ENCODE measurements at regions of chr10 and their contacts with region 1.

Region 1: GRCh38 chr10:59906417-59907202 is at the start of gene CCDC6:
- DNase-seq: peak; percentile 94
- ATAC-seq: peak; percentile 89
- H3K4me3 Mint-ChIP-seq: peak within 1 kb of the TSS; percentile 89
- H3K27ac Mint-ChIP-seq: peak within 1 kb of the TSS; percentile 94
- H3K4me1 Mint-ChIP-seq: peaks cover 54% of the 10 kb centered on the region
- H3K27me3 Mint-ChIP-seq: no peaks in the 10 kb centered on the region
- total RNA-seq, gene CCDC6: 18.3 to 19.4 TPM

Region 2: GRCh38 chr10:59479426-59479825 is 427.2 kb before region 1 on chr10:
- CTCF ChIA-PET with region 1: no interaction called
- POLR2A ChIA-PET with region 1: no interaction called
- DNase-seq: no peak
- ATAC-seq: no peak
- H3K4me3 Mint-ChIP-seq: no peak overlapping the region
- H3K27ac Mint-ChIP-seq: no peak overlapping the region
- H3K4me1 Mint-ChIP-seq: no peaks in the 10 kb centered on the region
- H3K27me3 Mint-ChIP-seq: no peaks in the 10 kb centered on the region

Region 3: DNA sequence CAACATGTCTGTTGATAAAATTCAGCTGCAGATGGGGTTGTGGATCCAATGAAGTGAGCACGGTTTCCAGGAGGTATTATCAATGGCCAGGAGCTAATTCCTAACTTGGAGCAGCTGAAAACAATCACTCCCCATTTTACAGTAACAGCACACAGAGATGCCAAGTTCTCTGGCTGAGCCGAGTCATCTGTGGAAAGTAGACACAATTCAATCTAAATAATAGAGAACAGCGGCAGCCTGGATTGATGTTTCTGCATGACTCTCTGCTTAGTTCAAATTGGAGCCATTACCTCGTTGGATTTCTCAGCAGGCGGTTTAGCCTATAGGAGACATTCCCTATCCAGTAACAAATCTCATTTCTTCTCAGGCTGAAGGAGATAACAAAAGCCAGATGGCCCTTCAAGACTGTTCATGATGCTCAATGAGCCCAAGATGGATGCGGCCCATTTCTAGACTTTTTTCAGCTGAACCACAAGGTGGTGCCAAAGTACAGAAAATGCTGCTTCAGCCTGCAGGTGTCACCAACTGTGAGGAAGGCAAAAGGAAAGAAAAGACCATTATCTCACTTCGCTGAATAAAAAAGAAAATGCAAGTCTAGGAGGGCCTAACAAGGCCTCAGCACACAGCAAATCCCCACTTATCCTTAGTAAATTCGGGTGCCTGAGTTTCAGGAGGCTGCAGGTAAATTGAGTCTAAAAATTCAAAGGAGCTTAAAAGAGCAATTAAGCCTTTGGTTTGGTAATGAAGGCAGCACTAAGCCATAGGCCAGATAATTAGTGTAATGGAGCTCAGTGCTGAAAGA is 280.7 kb before region 1 on chr10:
- CTCF ChIA-PET with region 1: interaction called, 13 read pairs
- POLR2A ChIA-PET with region 1: no interaction called
- DNase-seq: peak; percentile 56
- ATAC-seq: peak; percentile 91
- H3K4me3 Mint-ChIP-seq: no peak overlapping the region
- H3K27ac Mint-ChIP-seq: no peak overlapping the region
- H3K4me1 Mint-ChIP-seq: no peaks in the 10 kb centered on the region
- H3K27me3 Mint-ChIP-seq: peaks cover 2% of the 10 kb centered on the region

Region 4: GRCh38 chr10:59830601-59831259 is 75.9 kb before region 1 on chr10:
- CTCF ChIA-PET with region 1: interaction called, 21 read pairs
- POLR2A ChIA-PET with region 1: interaction called, 6 read pairs
- DNase-seq: peak; percentile 37
- ATAC-seq: no peak
- H3K4me3 Mint-ChIP-seq: no peak overlapping the region
- H3K27ac Mint-ChIP-seq: no peak overlapping the region
- H3K4me1 Mint-ChIP-seq: peaks cover 19% of the 10 kb centered on the region
- H3K27me3 Mint-ChIP-seq: no peaks in the 10 kb centered on the region

Region 5: DNA sequence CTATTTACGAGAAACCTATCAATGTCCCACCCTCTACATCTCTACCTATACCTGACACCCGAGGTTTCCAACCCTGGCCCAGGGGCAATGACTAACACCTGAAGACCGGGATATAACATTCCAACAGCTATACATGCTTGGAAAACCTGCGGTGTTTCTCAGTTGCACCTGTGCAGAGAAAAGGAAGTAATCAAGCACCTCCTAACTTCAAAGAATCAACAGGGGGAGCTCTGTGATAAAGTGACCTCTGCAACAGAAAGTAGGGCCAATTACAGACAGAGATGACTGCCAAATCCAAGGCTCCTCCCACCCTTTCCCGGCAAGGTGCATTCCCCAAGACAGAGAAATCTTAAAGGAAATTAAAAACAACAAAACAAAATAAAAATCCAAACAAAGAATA is 41.5 kb before region 1 on chr10:
- CTCF ChIA-PET with region 1: interaction called, 129 read pairs
- POLR2A ChIA-PET with region 1: interaction called, 38 read pairs
- DNase-seq: peak; percentile 36
- ATAC-seq: peak; percentile 77
- H3K4me3 Mint-ChIP-seq: no peak overlapping the region
- H3K27ac Mint-ChIP-seq: no peak overlapping the region
- H3K4me1 Mint-ChIP-seq: peaks cover 20% of the 10 kb centered on the region
- H3K27me3 Mint-ChIP-seq: no peaks in the 10 kb centered on the region

Region 6: DNA sequence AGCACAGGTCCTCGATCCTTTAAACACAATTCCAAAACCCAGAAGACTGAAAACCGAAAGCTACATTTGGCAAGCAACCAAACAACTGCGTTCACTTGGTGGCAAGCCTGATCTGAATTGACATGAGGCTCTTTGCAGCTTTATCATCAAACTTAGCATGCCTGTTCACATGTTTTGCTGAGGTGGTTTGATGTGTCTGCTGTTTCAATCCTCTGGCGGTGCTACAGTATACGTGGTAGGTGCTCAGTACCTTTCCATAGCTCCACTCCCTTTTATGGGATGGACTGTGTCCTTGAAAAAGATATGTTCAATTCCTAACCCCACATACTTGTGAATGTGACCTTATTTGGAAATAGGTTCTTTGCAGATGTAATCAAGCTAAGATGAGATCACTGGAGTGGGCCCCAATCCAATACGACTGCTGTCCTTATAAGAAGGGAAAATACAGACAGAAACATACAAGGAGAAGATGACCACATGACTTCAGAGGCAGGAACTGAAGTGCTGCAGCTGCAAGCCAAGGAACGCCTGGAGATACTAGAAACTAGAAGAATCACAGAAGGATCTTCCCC is 33.6 kb before region 1 on chr10:
- CTCF ChIA-PET with region 1: interaction called, 35 read pairs
- POLR2A ChIA-PET with region 1: interaction called, 19 read pairs
- DNase-seq: no peak
- ATAC-seq: no peak
- H3K4me3 Mint-ChIP-seq: no peak overlapping the region
- H3K27ac Mint-ChIP-seq: no peak overlapping the region
- H3K4me1 Mint-ChIP-seq: peaks cover 30% of the 10 kb centered on the region
- H3K27me3 Mint-ChIP-seq: no peaks in the 10 kb centered on the region

Region 7: GRCh38 chr10:59879361-59879913 is 27.2 kb before region 1 on chr10:
- CTCF ChIA-PET with region 1: interaction called, 35 read pairs
- POLR2A ChIA-PET with region 1: interaction called, 19 read pairs
- DNase-seq: no peak
- ATAC-seq: peak; percentile 42
- H3K4me3 Mint-ChIP-seq: peak overlapping the region; percentile 23
- H3K27ac Mint-ChIP-seq: peak overlapping the region; percentile 59
- H3K4me1 Mint-ChIP-seq: peaks cover 64% of the 10 kb centered on the region
- H3K27me3 Mint-ChIP-seq: no peaks in the 10 kb centered on the region

Region 8: DNA sequence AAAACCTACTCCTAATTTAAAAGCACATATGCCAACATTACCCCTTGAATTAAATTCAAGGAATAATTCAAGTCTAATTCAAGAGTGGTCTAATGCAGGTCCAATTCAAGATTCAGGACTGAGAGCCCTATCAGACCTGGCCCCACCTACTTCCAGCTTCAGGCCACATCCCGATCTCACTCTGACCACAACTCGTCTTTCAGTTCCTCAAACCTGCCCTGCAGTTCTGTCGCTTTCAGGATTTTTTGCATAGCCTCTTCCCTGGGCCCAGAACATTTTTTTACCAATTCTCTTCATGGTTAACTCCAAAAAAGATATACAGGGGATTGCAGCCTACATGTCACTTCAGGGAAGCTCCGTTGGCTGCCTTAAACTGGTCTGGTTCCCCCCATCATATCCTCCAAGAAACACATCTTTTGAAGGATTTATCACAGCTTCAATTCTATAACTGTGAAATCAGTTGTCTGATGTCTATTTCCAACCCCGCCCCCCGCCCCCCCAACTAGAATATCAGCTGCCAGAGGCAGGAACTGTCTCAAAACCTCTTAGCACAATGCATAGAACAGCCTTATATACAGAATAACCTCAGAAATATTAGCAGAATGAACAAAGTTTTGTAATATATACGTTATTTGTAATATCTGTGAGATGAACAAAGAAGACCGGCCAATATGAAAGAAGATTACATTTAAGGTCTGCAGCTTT is 21.0 kb before region 1 on chr10:
- CTCF ChIA-PET with region 1: interaction called, 34 read pairs
- POLR2A ChIA-PET with region 1: interaction called, 19 read pairs
- DNase-seq: peak; percentile 48
- ATAC-seq: peak; percentile 39
- H3K4me3 Mint-ChIP-seq: peak overlapping the region; percentile 13
- H3K27ac Mint-ChIP-seq: peak overlapping the region; percentile 0
- H3K4me1 Mint-ChIP-seq: peaks cover 71% of the 10 kb centered on the region
- H3K27me3 Mint-ChIP-seq: no peaks in the 10 kb centered on the region

Region 9: DNA sequence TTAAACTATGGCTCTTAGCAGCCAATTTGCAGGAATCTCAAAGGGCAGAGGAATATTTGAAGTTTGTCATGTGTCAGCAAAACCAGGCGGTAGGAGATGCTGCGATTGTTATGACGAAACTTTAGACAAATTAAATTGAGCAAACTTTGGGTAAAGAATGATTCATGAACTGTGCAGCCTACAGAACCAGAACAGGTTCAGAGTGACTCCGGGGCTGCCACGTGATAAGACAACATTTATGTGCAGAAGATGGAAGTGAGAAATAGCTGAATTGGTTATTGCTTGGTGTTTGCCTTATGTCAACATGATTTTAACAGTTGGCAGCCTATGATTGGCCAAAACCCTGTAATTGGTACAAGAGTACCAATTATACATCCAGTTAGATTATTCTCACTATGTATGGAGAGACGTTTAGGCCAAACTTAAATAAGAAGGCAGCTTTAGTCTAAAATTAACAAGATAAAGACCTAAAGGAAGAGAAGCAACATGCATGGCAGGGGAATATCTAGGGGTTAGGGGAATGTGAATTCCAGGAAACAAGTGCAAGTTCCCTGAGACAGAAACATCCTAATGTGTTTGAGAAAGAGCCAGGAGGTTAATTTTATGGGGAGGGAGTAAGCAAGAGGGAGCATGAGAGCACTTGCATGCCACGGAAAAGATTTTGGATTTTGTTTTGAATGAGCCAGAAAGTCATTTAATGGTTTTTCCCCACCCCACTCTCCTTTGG is 39.2 kb after region 1 on chr10:
- CTCF ChIA-PET with region 1: no interaction called
- POLR2A ChIA-PET with region 1: no interaction called
- DNase-seq: no peak
- ATAC-seq: no peak
- H3K4me3 Mint-ChIP-seq: no peak overlapping the region
- H3K27ac Mint-ChIP-seq: no peak overlapping the region
- H3K4me1 Mint-ChIP-seq: no peaks in the 10 kb centered on the region
- H3K27me3 Mint-ChIP-seq: peaks cover 3% of the 10 kb centered on the region